ENCODE measurements at regions of chr2 and their contacts with region 1.

Region 1: GRCh38 chr2:102975996-102976975 is 214.5 kb downstream of the TMEM182 start:
- DNase-seq: peak; percentile 64
- ATAC-seq: peak; percentile 96
- H3K4me3 Mint-ChIP-seq: no peak overlapping the region
- H3K27ac Mint-ChIP-seq: no peak overlapping the region
- H3K4me1 Mint-ChIP-seq: peaks cover 29% of the 10 kb centered on the region
- H3K27me3 Mint-ChIP-seq: no peaks in the 10 kb centered on the region
- CTCF ChIP-seq: no peak

Region 2: GRCh38 chr2:103008586-103008985 is 32.3 kb after region 1 on chr2:
- CTCF ChIA-PET with region 1: interaction called, 19 read pairs
- POLR2A ChIA-PET with region 1: no interaction called
- DNase-seq: peak; percentile 23
- ATAC-seq: peak; percentile 96
- H3K4me3 Mint-ChIP-seq: no peak overlapping the region
- H3K27ac Mint-ChIP-seq: no peak overlapping the region
- H3K4me1 Mint-ChIP-seq: peaks cover 3% of the 10 kb centered on the region; the same call in 1 of the 2 replicates
- H3K27me3 Mint-ChIP-seq: no peaks in the 10 kb centered on the region
- CTCF ChIP-seq: no peak